PC-3 (cell line): ENCODE measurements at regions of chr18 and their contacts with region 1.

Region 1: GRCh38 chr18:59899298-59900221 is at the start of gene PMAIP1:
- DNase-seq: peak; percentile 94
- ATAC-seq: peak; percentile 71
- H3K4me3 ChIP-seq: peak within 1 kb of the TSS; percentile 83
- H3K27ac ChIP-seq: peak within 1 kb of the TSS; percentile 94
- H3K4me1 ChIP-seq: peaks cover 47% of the 10 kb centered on the region
- H3K27me3 ChIP-seq: no peaks in the 10 kb centered on the region
- CTCF ChIP-seq: no peak
- total RNA-seq, gene PMAIP1: 39.2 and 41.5 TPM in 2 replicates

Region 2: DNA sequence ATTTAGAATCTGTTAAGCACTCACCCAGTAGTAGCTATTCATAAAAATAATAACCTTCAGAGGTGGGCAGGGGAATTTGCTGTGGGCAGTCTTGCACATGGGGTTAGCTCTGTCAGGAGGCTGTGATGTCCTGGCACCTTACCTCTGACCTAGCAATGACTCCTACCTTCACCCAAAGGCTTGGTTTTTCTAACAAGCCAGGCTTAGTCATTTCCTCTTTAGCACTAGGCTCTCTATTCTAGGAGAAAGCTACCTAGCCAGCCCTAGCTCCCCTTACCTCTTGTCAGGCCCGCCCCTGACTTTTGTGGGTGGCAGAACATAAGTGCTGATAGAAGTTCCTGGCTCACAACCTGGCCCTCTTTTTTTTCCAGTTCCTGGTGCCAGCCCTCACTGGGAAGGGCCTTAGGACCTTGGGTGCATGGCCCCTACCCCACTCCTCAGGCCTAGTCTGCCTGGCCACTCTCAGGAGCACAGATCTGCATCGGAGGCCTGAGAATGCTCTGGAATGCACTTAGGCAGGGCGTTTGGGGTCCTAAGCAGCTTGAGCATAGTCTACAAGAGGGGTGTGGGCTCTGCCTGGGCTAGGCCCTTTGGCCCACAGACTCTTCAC is 598.8 kb before region 1 on chr18:
- CTCF ChIA-PET with region 1: no interaction called
- POLR2A ChIA-PET with region 1: no interaction called
- intact Hi-C with region 1: no loop called
- DNase-seq: peak; percentile 84
- ATAC-seq: peak; percentile 96
- H3K4me3 ChIP-seq: no peak overlapping the region
- H3K27ac ChIP-seq: peak overlapping the region; percentile 67
- H3K4me1 ChIP-seq: peaks cover 36% of the 10 kb centered on the region
- H3K27me3 ChIP-seq: no peaks in the 10 kb centered on the region
- CTCF ChIP-seq: no peak

Region 3: DNA sequence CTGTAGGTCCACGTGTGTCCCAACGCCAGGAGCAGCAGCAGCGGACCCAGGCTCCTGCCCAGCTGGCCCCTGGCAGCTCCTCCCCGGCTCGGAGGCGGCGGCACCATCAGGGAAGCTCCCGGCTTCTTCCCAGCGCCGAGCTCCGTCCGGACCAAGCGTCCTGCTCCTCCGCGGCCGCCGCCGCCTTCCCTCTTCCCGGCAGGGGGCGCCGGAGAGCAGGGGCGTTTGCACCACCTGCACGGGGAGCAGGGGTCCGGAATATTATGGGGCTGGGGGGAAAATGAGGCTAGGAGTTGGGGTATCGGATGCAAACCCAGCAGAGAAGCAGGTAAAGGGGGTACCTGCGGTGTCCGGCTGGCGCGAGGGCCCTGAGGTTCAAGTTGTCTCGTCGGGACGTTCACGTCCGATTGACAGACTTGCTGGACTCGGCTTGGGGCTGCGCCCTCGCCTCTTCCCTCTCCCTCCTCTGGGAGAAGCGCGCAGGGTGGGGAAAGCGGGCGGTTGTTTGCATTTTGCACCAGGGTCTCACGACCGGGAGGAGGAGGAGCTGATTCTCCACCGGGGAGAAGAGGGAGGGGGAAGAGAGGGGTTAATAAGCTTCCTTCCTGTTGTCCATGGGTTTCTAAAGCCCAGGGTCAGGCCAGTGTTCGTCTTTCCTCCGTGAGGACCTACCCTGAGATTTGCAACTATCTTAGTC is 202.2 kb before region 1 on chr18 and contains the start of gene CCBE1:
- CTCF ChIA-PET with region 1: interaction called, 3 read pairs
- POLR2A ChIA-PET with region 1: interaction called, 3 read pairs
- intact Hi-C with region 1: loop called (anchors 10 kb)
- DNase-seq: peak; percentile 84
- ATAC-seq: peak; percentile 66
- H3K4me3 ChIP-seq: peak within 1 kb of the TSS; percentile 86
- H3K27ac ChIP-seq: peak within 1 kb of the TSS; percentile 35
- H3K4me1 ChIP-seq: peaks cover 43% of the 10 kb centered on the region
- H3K27me3 ChIP-seq: no peaks in the 10 kb centered on the region
- CTCF ChIP-seq: peak; percentile 93
- total RNA-seq, gene CCBE1: 13.9 and 20.8 TPM in 2 replicates

Region 4: GRCh38 chr18:59837586-59837985 is 62.0 kb before region 1 on chr18:
- CTCF ChIA-PET with region 1: interaction called, 18 read pairs
- POLR2A ChIA-PET with region 1: interaction called, 4 read pairs
- intact Hi-C with region 1: loop called (anchors 1 kb)
- DNase-seq: peak; percentile 88
- ATAC-seq: peak; percentile 87
- H3K4me3 ChIP-seq: no peak overlapping the region
- H3K27ac ChIP-seq: no peak overlapping the region
- H3K4me1 ChIP-seq: no peaks in the 10 kb centered on the region
- H3K27me3 ChIP-seq: no peaks in the 10 kb centered on the region
- CTCF ChIP-seq: peak; percentile 96

Region 5: GRCh38 chr18:59851784-59852399 is 47.7 kb before region 1 on chr18:
- CTCF ChIA-PET with region 1: no interaction called
- POLR2A ChIA-PET with region 1: interaction called, 19 read pairs
- intact Hi-C with region 1: no loop called
- DNase-seq: no peak
- ATAC-seq: peak; percentile 36
- H3K4me3 ChIP-seq: no peak overlapping the region
- H3K27ac ChIP-seq: no peak overlapping the region
- H3K4me1 ChIP-seq: peaks cover 16% of the 10 kb centered on the region
- H3K27me3 ChIP-seq: no peaks in the 10 kb centered on the region
- CTCF ChIP-seq: no peak

Region 6: DNA sequence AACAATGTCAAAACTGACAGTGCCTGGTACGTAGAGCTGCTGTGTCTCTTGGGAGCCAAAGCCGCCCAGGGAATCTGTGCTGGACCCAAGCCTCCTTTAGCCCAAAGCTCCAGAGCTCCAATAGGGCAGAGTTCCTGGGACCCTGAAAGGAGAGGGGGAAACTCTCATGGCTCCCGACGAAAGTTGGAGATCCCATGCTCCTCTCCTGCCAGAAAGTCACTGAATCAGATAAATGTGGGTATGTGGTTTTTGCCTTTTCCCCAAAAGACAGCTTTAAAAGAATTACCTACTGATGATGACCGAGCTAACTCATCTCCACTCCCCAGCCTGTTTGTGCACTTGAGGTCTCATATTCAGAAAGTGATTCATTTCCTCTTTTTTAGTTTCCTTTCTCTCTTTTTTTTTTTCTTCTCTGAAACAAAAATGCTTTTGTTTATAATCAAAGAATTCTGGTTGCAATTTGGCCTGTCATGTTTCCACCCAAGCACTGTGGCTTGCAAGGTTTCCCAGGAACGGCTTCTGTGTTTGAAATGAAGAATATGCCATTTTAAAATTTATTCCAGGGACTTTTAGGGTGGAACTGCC is 13.9 kb before region 1 on chr18:
- CTCF ChIA-PET with region 1: interaction called, 5 read pairs
- POLR2A ChIA-PET with region 1: interaction called, 17 read pairs
- intact Hi-C with region 1: loop called (anchors 2 kb)
- DNase-seq: peak; percentile 81
- ATAC-seq: peak; percentile 64
- H3K4me3 ChIP-seq: peak overlapping the region; percentile 51
- H3K27ac ChIP-seq: peak overlapping the region; percentile 95
- H3K4me1 ChIP-seq: peaks cover 34% of the 10 kb centered on the region
- H3K27me3 ChIP-seq: no peaks in the 10 kb centered on the region
- CTCF ChIP-seq: no peak

Region 7: GRCh38 chr18:59941331-59941730 is 41.8 kb after region 1 on chr18:
- CTCF ChIA-PET with region 1: no interaction called
- POLR2A ChIA-PET with region 1: no interaction called
- intact Hi-C with region 1: no loop called
- DNase-seq: no peak
- ATAC-seq: no peak
- H3K4me3 ChIP-seq: no peak overlapping the region
- H3K27ac ChIP-seq: no peak overlapping the region
- H3K4me1 ChIP-seq: peaks cover 8% of the 10 kb centered on the region
- H3K27me3 ChIP-seq: no peaks in the 10 kb centered on the region
- CTCF ChIP-seq: no peak

Region 8: GRCh38 chr18:59952283-59953007 is 52.9 kb after region 1 on chr18:
- CTCF ChIA-PET with region 1: no interaction called
- POLR2A ChIA-PET with region 1: interaction called, 23 read pairs
- intact Hi-C with region 1: loop called (anchors 1 kb)
- DNase-seq: no peak
- ATAC-seq: peak; percentile 9
- H3K4me3 ChIP-seq: no peak overlapping the region
- H3K27ac ChIP-seq: peak overlapping the region; percentile 72
- H3K4me1 ChIP-seq: peaks cover 41% of the 10 kb centered on the region
- H3K27me3 ChIP-seq: no peaks in the 10 kb centered on the region
- CTCF ChIP-seq: no peak